Activated B cell treated with CpG ODN at 0.5 μM for 24 hours (primary cell): ENCODE measurements at regions of chr7 and their contacts with region 1.

Region 1: GRCh38 chr7:44797329-44798251 is 1.1 kb downstream of the PPIA start:
- DNase-seq: peak; percentile 70
- ATAC-seq: peak; percentile 56
- H3K4me3 Mint-ChIP-seq: peak overlapping the region; percentile 97
- H3K27ac Mint-ChIP-seq: peak overlapping the region; percentile 96
- H3K4me1 Mint-ChIP-seq: peaks cover 38% of the 10 kb centered on the region
- H3K27me3 Mint-ChIP-seq: no peaks in the 10 kb centered on the region
- CTCF ChIP-seq: no peak

Region 2: GRCh38 chr7:44581879-44582603 is 215.5 kb before region 1 on chr7 and contains the start of gene TMED4:
- CTCF ChIA-PET with region 1: no interaction called
- POLR2A ChIA-PET with region 1: interaction called, 10 read pairs
- intact Hi-C with region 1: loop called (anchors 1 kb)
- DNase-seq: peak; percentile 100
- ATAC-seq: peak; percentile 90
- H3K4me3 Mint-ChIP-seq: peak within 1 kb of the TSS; percentile 90
- H3K27ac Mint-ChIP-seq: peak within 1 kb of the TSS; percentile 95
- H3K4me1 Mint-ChIP-seq: peaks cover 29% of the 10 kb centered on the region
- H3K27me3 Mint-ChIP-seq: peaks cover 2% of the 10 kb centered on the region
- CTCF ChIP-seq: no peak
- total RNA-seq, gene TMED4: 61.7 and 70.1 TPM in 2 replicates

Region 3: DNA sequence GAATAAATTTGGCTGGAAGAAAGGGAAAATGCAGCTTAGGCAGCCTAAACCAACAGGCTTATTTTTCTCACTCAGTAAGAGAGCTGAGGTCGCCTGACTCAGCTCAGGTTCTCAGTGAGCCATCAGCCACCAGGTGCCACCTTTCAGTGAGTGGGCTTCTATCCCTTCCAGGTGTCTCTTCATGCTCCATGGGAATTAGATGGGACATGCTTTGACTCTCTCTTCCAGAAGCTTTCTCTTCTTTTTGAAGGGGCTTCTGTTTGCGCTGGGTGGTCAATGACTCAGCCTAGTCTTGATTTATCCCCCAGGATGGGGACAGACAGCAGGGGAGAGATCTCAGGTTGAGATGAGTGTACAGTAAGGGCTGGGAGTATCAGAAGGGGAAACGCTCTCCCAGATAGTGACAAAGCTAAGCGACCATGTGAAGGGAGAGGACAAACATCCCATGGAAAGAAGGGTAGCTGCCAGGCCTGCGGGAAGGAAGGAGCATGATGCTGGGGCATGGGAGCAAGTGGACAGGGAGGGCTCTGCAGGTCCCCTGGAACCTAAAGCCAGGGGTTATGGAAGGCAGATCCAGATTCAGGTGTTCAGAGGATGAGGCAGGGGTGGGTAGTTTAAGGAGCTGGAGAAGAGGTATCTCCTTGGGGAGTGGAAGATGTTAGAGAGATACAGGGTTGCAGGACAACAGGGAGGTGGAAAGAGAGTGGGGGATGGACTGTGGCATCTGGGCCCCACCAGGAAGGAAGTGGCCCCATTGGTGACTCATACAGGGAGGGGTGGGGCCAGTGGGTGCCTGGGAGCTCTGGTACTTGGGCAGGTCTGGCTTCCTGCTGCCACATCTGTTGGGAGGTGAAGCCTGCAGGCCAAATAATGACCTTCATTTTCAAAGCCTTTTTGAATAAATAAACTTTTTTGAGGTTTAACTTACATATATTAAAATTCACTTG is 158.7 kb before region 1 on chr7:
- CTCF ChIA-PET with region 1: interaction called, 4 read pairs
- POLR2A ChIA-PET with region 1: interaction called, 16 read pairs
- intact Hi-C with region 1: loop called (anchors 1 kb)
- DNase-seq: peak; percentile 69
- ATAC-seq: peak; percentile 82
- H3K4me3 Mint-ChIP-seq: peak overlapping the region; percentile 84
- H3K27ac Mint-ChIP-seq: peak overlapping the region; percentile 97
- H3K4me1 Mint-ChIP-seq: peaks cover 64% of the 10 kb centered on the region
- H3K27me3 Mint-ChIP-seq: no peaks in the 10 kb centered on the region
- CTCF ChIP-seq: no peak

Region 4: GRCh38 chr7:44787041-44787440 is 10.5 kb before region 1 on chr7:
- CTCF ChIA-PET with region 1: interaction called, 3 read pairs
- POLR2A ChIA-PET with region 1: interaction called, 10 read pairs
- intact Hi-C with region 1: no loop called
- DNase-seq: no peak
- ATAC-seq: peak; percentile 86
- H3K4me3 Mint-ChIP-seq: no peak overlapping the region
- H3K27ac Mint-ChIP-seq: peak overlapping the region; percentile 71
- H3K4me1 Mint-ChIP-seq: peaks cover 11% of the 10 kb centered on the region
- H3K27me3 Mint-ChIP-seq: no peaks in the 10 kb centered on the region
- CTCF ChIP-seq: no peak

Region 5: GRCh38 chr7:44986218-44987053 is 188.8 kb after region 1 on chr7:
- CTCF ChIA-PET with region 1: no interaction called
- POLR2A ChIA-PET with region 1: interaction called, 4 read pairs
- intact Hi-C with region 1: loop called (anchors 2 kb)
- DNase-seq: peak; percentile 97
- ATAC-seq: peak; percentile 92
- H3K4me3 Mint-ChIP-seq: peak overlapping the region; percentile 98
- H3K27ac Mint-ChIP-seq: peak overlapping the region; percentile 98
- H3K4me1 Mint-ChIP-seq: peaks cover 58% of the 10 kb centered on the region
- H3K27me3 Mint-ChIP-seq: no peaks in the 10 kb centered on the region
- CTCF ChIP-seq: no peak